CD4-positive, alpha-beta memory T cell (primary cell): ENCODE measurements at regions of chr12 and their contacts with region 1.

Region 1: DNA sequence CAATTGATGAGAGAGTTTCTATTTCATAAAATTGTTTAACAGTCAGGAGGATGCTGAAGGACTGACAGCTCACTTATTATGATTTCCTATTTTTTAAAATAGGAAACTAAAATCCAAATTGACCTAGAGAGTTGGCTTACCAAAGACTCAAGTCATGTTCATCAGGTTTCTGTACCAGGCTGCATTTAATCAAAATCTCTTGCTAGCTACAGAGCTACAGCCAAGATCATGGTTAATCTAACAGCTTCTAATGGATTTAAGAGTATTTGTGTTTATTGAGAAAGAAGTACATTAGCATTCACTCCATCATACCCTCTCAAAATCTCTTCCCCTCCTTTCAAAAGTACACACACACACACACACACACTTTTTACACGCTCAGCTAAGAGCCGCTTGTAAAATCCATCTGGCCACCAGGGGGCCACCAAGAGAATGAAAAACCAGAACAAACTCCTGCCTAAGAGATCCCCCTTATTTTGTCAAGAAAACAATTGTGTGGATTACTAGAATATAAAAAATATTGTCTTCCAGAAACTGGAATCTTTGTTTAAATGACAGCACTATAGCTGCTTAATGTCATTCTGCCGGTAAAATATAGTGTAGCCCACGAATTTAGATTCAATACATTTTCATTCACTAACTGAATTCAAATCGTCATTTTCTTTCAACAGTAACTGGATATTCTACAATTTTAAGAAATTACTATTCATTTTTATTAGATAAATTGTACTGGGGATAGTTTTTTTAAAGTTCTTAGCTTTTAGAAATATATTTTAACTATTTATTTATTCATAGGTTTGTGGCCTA is 334.0 kb downstream of the BTG1 start:
- DNase-seq: peak; percentile 64 to 73 (median 67)
- H3K4me3 ChIP-seq: no peak overlapping the region
- H3K4me3 Mint-ChIP-seq: peak overlapping the region in 5 of 8 donors; percentile 2 to 57 (median 44)
- H3K27ac ChIP-seq: no peak overlapping the region
- H3K27ac Mint-ChIP-seq: peak overlapping the region; percentile 7 to 92 (median 84)
- H3K4me1 ChIP-seq: peaks cover 8% of the 10 kb centered on the region
- H3K4me1 Mint-ChIP-seq: peaks cover 4 to 13% (median 12%) of the 10 kb centered on the region in 4 donors
- H3K27me3 ChIP-seq: no peaks in the 10 kb centered on the region
- H3K27me3 Mint-ChIP-seq: no peaks in the 10 kb centered on the region

Region 2: DNA sequence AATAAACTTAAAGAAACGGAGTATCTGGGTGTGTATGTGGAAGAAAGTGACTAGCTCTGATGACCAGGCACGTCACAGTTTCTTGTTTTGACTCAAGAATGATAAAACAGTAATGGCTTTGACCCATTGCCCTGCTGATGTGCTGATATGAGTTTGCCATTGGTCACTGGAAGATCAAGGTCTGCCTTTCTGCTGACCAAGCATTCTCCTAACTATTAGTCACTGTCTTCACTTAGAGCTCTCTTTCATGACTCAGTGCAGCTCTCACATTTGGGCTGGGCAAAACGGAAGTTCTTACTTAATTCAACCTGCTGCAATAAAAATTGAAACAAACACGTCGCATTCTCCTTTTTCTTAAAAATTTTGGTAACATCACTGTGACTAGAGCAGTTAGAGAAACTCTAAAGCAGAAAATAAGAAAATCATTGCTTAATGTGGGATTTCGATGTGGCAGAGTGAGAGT is 32.7 kb before region 1 on chr12:
- CTCF ChIA-PET with region 1: interaction called, 23 read pairs
- POLR2A ChIA-PET with region 1: interaction called, 16 read pairs
- intact Hi-C with region 1: no loop called
- DNase-seq: peak; percentile 23 to 71 (median 32)
- H3K4me3 ChIP-seq: peak overlapping the region; percentile 7 to 14
- H3K4me3 Mint-ChIP-seq: peak overlapping the region; percentile 72 to 88 (median 82)
- H3K27ac ChIP-seq: peak overlapping the region; percentile 49
- H3K27ac Mint-ChIP-seq: peak overlapping the region; percentile 70 to 95 (median 90)
- H3K4me1 ChIP-seq: peaks cover 35% of the 10 kb centered on the region
- H3K4me1 Mint-ChIP-seq: peaks cover 24 to 31% (median 27%) of the 10 kb centered on the region in 4 donors
- H3K27me3 ChIP-seq: no peaks in the 10 kb centered on the region
- H3K27me3 Mint-ChIP-seq: no peaks in the 10 kb centered on the region

Region 3: DNA sequence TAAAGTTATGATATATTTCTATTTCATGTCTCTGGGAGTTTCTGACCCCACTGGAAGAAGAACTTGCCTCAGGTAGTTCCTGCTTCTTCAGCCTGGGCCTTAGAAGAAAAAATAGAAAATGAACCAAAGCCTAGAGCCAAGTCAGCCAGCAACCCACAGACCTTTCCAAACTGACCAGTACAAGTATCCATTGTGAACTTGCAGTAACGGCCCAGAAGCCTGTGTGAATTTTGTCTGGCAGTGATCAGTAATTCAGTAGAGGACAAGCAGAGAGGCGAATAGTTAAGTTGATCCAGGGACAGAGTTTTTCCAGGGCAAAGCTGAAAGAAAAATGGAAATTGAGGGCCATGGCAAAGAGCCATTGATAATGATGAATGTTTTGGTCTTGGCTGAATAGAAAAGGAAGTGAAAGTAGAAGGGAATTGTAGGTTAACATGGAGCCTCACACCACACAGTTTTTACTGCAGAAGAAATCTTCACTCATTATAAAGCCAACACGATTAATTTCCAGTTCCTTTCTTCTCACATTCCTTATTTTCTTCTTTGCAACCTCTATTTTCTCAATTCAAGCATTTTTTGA is 22.2 kb after region 1 on chr12:
- CTCF ChIA-PET with region 1: interaction called, 14 read pairs
- POLR2A ChIA-PET with region 1: no interaction called
- intact Hi-C with region 1: no loop called
- DNase-seq: no peak
- H3K4me3 ChIP-seq: no peak overlapping the region
- H3K4me3 Mint-ChIP-seq: no peak overlapping the region
- H3K27ac ChIP-seq: no peak overlapping the region
- H3K27ac Mint-ChIP-seq: peak overlapping the region in 2 of 7 donors; percentile 2 to 43
- H3K4me1 ChIP-seq: no peaks in the 10 kb centered on the region
- H3K4me1 Mint-ChIP-seq: peaks cover 0 to 9% (median 4%) of the 10 kb centered on the region in 4 donors
- H3K27me3 ChIP-seq: no peaks in the 10 kb centered on the region
- H3K27me3 Mint-ChIP-seq: no peaks in the 10 kb centered on the region

Region 4: GRCh38 chr12:91926848-91927247 is 115.2 kb after region 1 on chr12:
- CTCF ChIA-PET with region 1: interaction called, 6 read pairs
- POLR2A ChIA-PET with region 1: no interaction called
- intact Hi-C with region 1: loop called (anchors 10 kb)
- DNase-seq: no peak
- H3K4me3 ChIP-seq: no peak overlapping the region
- H3K4me3 Mint-ChIP-seq: no peak overlapping the region
- H3K27ac ChIP-seq: no peak overlapping the region
- H3K27ac Mint-ChIP-seq: no peak overlapping the region
- H3K4me1 ChIP-seq: peaks cover under 1% of the 10 kb centered on the region
- H3K4me1 Mint-ChIP-seq: peaks cover 1 to 7% (median 6%) of the 10 kb centered on the region in 4 donors
- H3K27me3 ChIP-seq: no peaks in the 10 kb centered on the region
- H3K27me3 Mint-ChIP-seq: no peaks in the 10 kb centered on the region

Region 5: DNA sequence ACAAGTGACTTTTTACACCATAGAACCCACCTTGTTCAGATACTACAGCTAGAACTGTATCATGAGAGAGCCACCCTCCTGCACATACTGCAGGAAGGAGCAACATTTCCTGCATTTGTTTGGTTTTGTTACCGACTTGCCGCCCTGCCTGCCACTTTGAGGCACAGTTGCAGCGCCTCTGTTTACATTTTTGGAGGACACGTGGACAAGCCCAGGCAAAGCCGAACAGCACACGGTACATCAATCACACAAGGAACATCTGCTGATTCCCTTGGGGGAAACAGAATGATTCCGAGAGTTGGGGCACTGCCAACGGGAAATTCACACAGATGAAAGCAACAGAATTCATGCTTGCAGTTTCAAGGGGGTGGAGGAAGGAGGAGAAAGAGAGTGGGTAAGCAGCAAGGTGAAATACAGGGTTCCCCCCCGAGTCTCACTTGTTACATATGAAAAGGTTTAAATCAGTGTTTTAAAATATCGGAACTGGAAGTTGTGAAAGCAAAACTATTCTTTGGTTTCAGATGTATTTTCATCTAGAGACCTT is 223.2 kb after region 1 on chr12:
- CTCF ChIA-PET with region 1: interaction called, 14 read pairs
- POLR2A ChIA-PET with region 1: interaction called, 11 read pairs
- intact Hi-C with region 1: loop called (anchors 5 kb)
- DNase-seq: peak; percentile 55 to 62 (median 59)
- H3K4me3 ChIP-seq: peak overlapping the region; percentile 24 to 44
- H3K4me3 Mint-ChIP-seq: peak overlapping the region; percentile 83 to 97 (median 91)
- H3K27ac ChIP-seq: peak overlapping the region; percentile 65
- H3K27ac Mint-ChIP-seq: peak overlapping the region; percentile 97 to 100 (median 98)
- H3K4me1 ChIP-seq: peaks cover 92% of the 10 kb centered on the region
- H3K4me1 Mint-ChIP-seq: peaks cover 66 to 97% (median 81%) of the 10 kb centered on the region in 4 donors
- H3K27me3 ChIP-seq: no peaks in the 10 kb centered on the region
- H3K27me3 Mint-ChIP-seq: no peaks in the 10 kb centered on the region

Region 6: GRCh38 chr12:92570056-92570753 is 758.5 kb after region 1 on chr12:
- CTCF ChIA-PET with region 1: interaction called, 28 read pairs
- POLR2A ChIA-PET with region 1: interaction called, 8 read pairs
- intact Hi-C with region 1: loop called (anchors 1 kb)
- DNase-seq: peak; percentile 54 to 76 (median 74)
- H3K4me3 ChIP-seq: no peak overlapping the region
- H3K4me3 Mint-ChIP-seq: no peak overlapping the region
- H3K27ac ChIP-seq: no peak overlapping the region
- H3K27ac Mint-ChIP-seq: no peak overlapping the region
- H3K4me1 ChIP-seq: peaks cover 26% of the 10 kb centered on the region
- H3K4me1 Mint-ChIP-seq: peaks cover 4 to 17% (median 10%) of the 10 kb centered on the region in 4 donors
- H3K27me3 ChIP-seq: no peaks in the 10 kb centered on the region
- H3K27me3 Mint-ChIP-seq: no peaks in the 10 kb centered on the region